Activated CD8-positive, alpha-beta T cell treated with anti-CD3 and anti-CD28 coated beads for 36 hours (primary cell): ENCODE measurements at regions of chr10 and their contacts with region 1.

Region 1: DNA sequence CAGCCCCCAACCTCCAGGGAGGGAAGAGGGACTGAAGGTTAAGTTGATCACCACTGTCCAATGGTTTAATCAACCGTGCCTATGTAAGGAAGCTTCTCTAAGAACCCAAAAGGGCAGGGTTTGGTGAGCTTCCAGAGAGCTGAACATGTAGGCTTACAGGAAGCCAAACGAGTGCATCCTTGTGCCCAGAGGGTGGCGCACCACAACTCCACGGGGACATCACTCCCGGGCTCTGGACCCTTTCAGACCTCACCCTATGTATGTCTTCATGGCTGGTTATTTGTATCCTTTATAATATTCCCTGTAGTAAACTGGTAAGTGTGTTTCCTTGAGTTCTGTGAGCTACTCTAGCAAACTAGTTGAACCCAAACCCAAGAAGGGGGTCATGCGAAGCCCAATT is 11.5 kb upstream of the NFKB2 start:
- DNase-seq: peak; percentile 49
- ATAC-seq: peak; percentile 49
- H3K4me3 Mint-ChIP-seq: no peak overlapping the region
- H3K27ac Mint-ChIP-seq: no peak overlapping the region
- H3K4me1 Mint-ChIP-seq: peaks cover 3% of the 10 kb centered on the region
- H3K27me3 Mint-ChIP-seq: no peaks in the 10 kb centered on the region
- CTCF ChIP-seq: peak; percentile 29

Region 2: GRCh38 chr10:102283488-102283887 is 100.6 kb before region 1 on chr10:
- CTCF ChIA-PET with region 1: no interaction called
- POLR2A ChIA-PET with region 1: no interaction called
- intact Hi-C with region 1: no loop called
- DNase-seq: no peak
- ATAC-seq: no peak
- H3K4me3 Mint-ChIP-seq: no peak overlapping the region
- H3K27ac Mint-ChIP-seq: peak overlapping the region; percentile 72
- H3K4me1 Mint-ChIP-seq: peaks cover 75% of the 10 kb centered on the region
- H3K27me3 Mint-ChIP-seq: no peaks in the 10 kb centered on the region
- CTCF ChIP-seq: no peak

Region 3: DNA sequence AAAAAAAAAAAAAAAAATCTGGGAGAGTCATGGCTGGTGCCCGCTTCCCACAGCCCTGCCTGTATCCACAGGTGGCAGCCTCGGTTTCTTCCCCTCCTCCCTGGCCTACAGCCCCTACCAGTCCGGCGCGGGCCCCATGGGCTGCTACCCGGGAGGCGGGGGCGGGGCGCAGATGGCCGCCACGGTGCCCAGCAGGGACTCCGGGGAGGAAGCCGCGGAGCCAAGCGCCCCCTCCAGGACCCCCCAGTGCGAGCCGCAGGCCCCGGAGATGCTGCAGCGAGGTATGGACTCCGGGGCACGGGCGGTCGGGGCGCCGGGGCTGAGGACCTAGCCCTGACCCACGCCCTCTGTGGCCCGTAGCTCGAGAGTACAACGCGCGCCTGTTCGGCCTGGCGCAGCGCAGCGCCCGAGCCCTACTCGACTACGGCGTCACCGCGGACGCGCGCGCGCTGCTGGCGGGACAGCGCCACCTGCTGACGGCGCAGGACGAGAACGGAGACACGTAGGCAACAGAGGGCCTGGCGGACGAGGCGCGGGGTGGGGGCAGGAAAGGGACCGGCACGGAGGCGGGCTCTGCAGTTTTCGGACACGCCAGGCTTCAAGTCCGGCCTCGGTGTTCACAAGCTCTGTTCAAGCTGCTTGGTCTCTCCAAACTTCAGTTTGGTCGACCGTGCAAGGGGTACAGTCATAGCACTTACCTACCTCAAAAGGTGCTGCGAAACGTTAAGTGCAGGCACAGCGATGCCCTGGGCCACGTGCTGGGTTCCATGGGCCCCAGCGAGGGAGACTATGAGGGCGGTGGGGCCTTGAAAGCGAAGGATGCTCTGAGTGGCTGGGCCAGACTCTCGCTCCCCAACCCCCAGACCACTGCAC is 15.4 kb after region 1 on chr10:
- CTCF ChIA-PET with region 1: interaction called, 36 read pairs
- POLR2A ChIA-PET with region 1: interaction called, 22 read pairs
- intact Hi-C with region 1: no loop called
- DNase-seq: peak; percentile 92
- ATAC-seq: peak; percentile 58
- H3K4me3 Mint-ChIP-seq: peak overlapping the region; percentile 93
- H3K27ac Mint-ChIP-seq: peak overlapping the region; percentile 86
- H3K4me1 Mint-ChIP-seq: peaks cover 47% of the 10 kb centered on the region
- H3K27me3 Mint-ChIP-seq: no peaks in the 10 kb centered on the region
- CTCF ChIP-seq: peak; percentile 98